Activated B cell treated with CpG ODN at 0.5 μM for 24 hours (primary cell): ENCODE measurements at regions of chr18 and their contacts with region 1.

Region 1: GRCh38 chr18:50266248-50266704 is at the start of gene CFAP53:
- DNase-seq: peak; percentile 91
- ATAC-seq: peak; percentile 80
- H3K4me3 Mint-ChIP-seq: peak within 1 kb of the TSS; percentile 89
- H3K27ac Mint-ChIP-seq: peak within 1 kb of the TSS; percentile 88
- H3K4me1 Mint-ChIP-seq: peaks cover 28% of the 10 kb centered on the region
- H3K27me3 Mint-ChIP-seq: no peaks in the 10 kb centered on the region
- CTCF ChIP-seq: no peak
- total RNA-seq, gene CFAP53: 0.27 and 0.29 TPM in 2 replicates

Region 2: DNA sequence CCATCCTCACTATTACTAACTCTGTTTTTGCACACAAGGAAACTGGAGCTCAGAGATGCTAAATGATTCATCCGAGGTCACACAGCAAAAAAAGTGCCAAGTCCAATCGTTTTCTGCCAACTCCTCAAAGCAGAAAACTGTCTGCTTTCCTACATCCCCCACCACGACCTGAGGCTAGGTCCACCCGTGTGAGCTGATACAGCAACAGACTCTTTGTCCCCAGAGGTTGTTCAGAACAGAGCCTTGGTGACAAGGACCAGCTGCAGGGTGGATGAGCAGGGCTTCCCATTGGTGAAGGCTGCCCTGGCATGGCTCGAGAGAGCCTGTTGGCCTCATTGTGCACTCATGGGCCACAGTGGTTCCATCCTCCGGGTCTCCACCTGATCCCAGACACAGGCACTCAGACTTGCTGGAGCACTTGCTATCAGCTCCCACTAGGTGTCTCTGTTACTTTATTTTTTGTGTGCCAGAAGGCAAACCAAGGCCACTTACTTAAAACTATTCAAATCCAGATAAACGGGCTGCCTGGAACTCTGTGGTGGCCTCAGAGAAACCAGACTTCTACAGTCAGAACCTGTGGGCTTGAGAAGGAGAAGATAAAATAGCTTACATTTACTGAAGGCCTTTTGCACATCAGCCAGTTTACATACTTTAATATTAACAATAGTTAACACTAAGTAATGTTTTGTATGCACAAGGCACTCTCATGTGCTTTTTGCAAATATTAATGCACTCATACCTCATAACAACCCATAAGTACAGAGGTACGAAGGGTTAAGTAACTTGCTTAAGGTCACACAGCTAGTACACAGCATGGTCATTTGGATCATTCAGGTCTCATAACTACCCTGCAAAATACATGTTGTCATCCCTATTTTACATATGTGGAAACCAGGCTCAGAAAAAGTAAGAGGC is 1790.4 kb before region 1 on chr18:
- CTCF ChIA-PET with region 1: no interaction called
- POLR2A ChIA-PET with region 1: no interaction called
- intact Hi-C with region 1: loop called (anchors 10 kb)
- DNase-seq: no peak
- ATAC-seq: peak; percentile 37
- H3K4me3 Mint-ChIP-seq: no peak overlapping the region
- H3K27ac Mint-ChIP-seq: no peak overlapping the region
- H3K4me1 Mint-ChIP-seq: no peaks in the 10 kb centered on the region
- H3K27me3 Mint-ChIP-seq: peaks cover 23% of the 10 kb centered on the region
- CTCF ChIP-seq: peak; percentile 30

Region 3: GRCh38 chr18:49510393-49511115 is 755.7 kb before region 1 on chr18:
- CTCF ChIA-PET with region 1: no interaction called
- POLR2A ChIA-PET with region 1: no interaction called
- intact Hi-C with region 1: loop called (anchors 1 kb)
- DNase-seq: peak; percentile 32
- ATAC-seq: peak; percentile 67
- H3K4me3 Mint-ChIP-seq: no peak overlapping the region
- H3K27ac Mint-ChIP-seq: no peak overlapping the region
- H3K4me1 Mint-ChIP-seq: no peaks in the 10 kb centered on the region
- H3K27me3 Mint-ChIP-seq: peaks cover 18% of the 10 kb centered on the region
- CTCF ChIP-seq: no peak

Region 4: GRCh38 chr18:50194631-50195532 is 71.4 kb before region 1 on chr18 and contains the start of gene MYO5B:
- CTCF ChIA-PET with region 1: no interaction called
- POLR2A ChIA-PET with region 1: no interaction called
- intact Hi-C with region 1: loop called (anchors 5 kb)
- DNase-seq: peak; percentile 57
- ATAC-seq: peak; percentile 87
- H3K4me3 Mint-ChIP-seq: peak within 1 kb of the TSS; percentile 33
- H3K27ac Mint-ChIP-seq: no peak within 1 kb of the TSS
- H3K4me1 Mint-ChIP-seq: peaks cover 12% of the 10 kb centered on the region
- H3K27me3 Mint-ChIP-seq: peaks cover 53% of the 10 kb centered on the region
- CTCF ChIP-seq: no peak
- total RNA-seq, gene MYO5B: 0.49 and 0.51 TPM in 2 replicates

Region 5: DNA sequence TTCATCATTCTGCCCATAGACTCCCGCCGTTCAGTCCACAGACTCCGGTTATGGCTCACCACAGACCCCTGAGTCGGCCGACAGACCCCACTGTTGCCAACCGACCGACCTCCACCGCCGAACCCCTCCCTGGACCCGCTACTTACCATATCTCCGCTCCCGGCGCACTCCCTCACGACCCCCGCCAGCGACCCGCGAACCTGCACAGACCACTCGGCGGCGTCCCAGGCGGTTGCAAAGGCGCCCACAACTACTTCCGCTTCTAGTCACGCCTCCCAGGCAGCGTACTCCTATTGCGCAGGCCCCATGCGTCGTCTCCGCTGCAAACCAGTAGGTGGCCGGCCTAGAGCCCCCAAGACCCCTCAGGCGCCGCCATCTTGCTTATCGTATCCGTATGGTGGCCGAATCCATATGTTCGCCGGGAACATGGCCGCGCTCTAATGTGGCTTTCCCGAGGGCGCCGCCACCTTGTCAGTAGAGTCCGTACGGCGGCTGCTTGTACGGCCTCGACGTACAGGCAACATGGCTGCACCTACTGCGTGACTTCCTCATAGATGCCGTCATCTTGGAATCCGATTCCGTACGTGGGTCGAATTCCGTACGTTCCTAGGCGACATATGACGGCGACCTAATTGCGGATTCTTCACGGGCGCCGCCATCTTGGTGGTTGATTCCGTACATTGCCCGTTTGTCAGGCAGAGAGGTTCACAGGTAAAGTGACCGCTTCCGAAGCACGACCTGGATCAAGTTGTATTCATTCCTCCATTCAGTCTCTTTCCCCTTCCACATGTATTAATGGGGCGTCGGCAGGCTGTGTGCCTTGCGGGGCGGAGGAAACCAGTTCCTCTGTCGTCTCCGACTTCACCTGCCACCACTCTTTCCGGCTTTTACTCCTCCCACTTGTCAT is 21.4 kb after region 1 on chr18 and contains the start of gene CXXC1:
- CTCF ChIA-PET with region 1: interaction called, 14 read pairs
- POLR2A ChIA-PET with region 1: interaction called, 4 read pairs
- intact Hi-C with region 1: loop called (anchors 1 kb)
- DNase-seq: peak; percentile 88
- ATAC-seq: peak; percentile 87
- H3K4me3 Mint-ChIP-seq: peak within 1 kb of the TSS; percentile 99
- H3K27ac Mint-ChIP-seq: peak within 1 kb of the TSS; percentile 95
- H3K4me1 Mint-ChIP-seq: peaks cover 23% of the 10 kb centered on the region
- H3K27me3 Mint-ChIP-seq: no peaks in the 10 kb centered on the region
- CTCF ChIP-seq: no peak
- total RNA-seq, gene CXXC1: 126 and 134 TPM in 2 replicates

Region 6: GRCh38 chr18:50374753-50375391 is 108.6 kb after region 1 on chr18 and contains the start of gene SKA1:
- CTCF ChIA-PET with region 1: interaction called, 4 read pairs
- POLR2A ChIA-PET with region 1: interaction called, 12 read pairs
- intact Hi-C with region 1: loop called (anchors 1 kb)
- DNase-seq: peak; percentile 85
- ATAC-seq: peak; percentile 100
- H3K4me3 Mint-ChIP-seq: peak within 1 kb of the TSS; percentile 83
- H3K27ac Mint-ChIP-seq: peak within 1 kb of the TSS; percentile 84
- H3K4me1 Mint-ChIP-seq: peaks cover 14% of the 10 kb centered on the region
- H3K27me3 Mint-ChIP-seq: peaks cover 6% of the 10 kb centered on the region
- CTCF ChIP-seq: no peak
- total RNA-seq, gene SKA1: 0.71 and 1.0 TPM in 2 replicates